Breast epithelium (tissue), 4 donors: ENCODE measurements at regions of chr12 and their contacts with region 1.

Region 1: DNA sequence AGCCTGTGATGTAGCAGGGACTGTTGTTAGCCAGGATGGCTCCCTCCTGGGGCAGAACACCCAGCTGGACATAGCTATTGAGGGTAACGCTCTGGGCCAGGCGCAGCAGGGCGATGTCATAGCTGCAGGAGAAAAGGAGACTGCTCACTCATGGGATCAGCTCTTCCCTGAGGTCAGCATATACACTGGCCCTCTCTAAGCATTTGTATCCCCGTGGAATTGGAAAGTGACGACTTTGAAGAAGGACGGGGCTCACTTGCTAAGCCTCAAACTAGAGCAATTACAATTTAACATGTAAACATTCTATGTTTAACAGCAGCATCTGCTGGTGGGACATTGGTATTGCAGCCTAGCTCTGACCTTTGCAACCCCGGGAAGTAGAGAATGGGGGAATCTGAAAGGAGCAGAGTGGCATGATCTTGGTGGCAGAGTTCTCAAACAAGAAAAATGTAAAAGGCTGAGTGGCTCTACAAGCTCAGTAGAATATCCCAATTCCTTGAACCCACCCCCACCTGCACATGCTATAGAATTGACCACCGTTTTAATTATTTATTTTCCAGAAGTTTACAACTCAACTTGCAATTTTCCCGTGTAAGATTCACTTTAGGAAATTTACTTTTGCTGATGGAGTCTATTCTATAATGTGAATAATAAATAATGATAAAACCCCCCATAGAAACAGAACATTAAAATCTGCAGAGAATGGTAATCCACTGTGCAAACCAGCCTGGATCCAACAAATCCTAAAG is 5.0 kb downstream of the CELA1 start:
- DNase-seq: peak; percentile 58 to 60
- H3K4me3 ChIP-seq: peak overlapping the region in 2 of 3 donors; percentile 16 to 53
- H3K27ac ChIP-seq: peak overlapping the region; percentile 16 to 40
- H3K4me1 ChIP-seq: no peaks in the 10 kb centered on the region
- H3K27me3 ChIP-seq: no peaks in the 10 kb centered on the region
- CTCF ChIP-seq: peak; percentile 98 to 99 (median 98)
- POLR2A ChIP-seq: no peak

Region 2: DNA sequence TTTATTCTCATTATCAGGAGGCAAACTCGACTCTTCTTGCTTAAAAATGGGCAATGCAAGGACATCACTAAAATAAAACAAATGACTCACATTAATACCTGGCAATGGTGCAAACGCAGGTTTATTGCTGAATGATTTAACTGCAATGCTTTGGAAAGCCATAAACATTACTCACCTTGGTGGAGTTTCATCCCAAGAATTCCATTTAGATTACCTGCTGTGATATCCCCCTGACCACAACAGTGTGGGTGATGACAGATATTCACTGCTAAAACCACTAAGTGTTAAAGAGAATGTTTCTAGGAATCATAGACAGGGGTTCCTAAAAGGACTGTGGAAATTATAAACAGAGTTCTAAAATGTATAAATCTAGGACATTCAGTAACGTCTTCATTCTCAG is 222.7 kb before region 1 on chr12:
- intact Hi-C with region 1: loop called (anchors 10 kb)
- DNase-seq: no peak
- H3K4me3 ChIP-seq: no peak overlapping the region
- H3K27ac ChIP-seq: no peak overlapping the region
- H3K4me1 ChIP-seq: no peaks in the 10 kb centered on the region
- H3K27me3 ChIP-seq: no peaks in the 10 kb centered on the region
- CTCF ChIP-seq: no peak
- POLR2A ChIP-seq: no peak

Region 3: GRCh38 chr12:51270067-51270970 is 71.1 kb before region 1 on chr12 and contains the start of gene SMAGP:
- intact Hi-C with region 1: loop called (anchors 5 kb)
- DNase-seq: peak; percentile 69 to 85
- H3K4me3 ChIP-seq: peak within 1 kb of the TSS; percentile 66 to 90 (median 79)
- H3K27ac ChIP-seq: peak within 1 kb of the TSS; percentile 87 to 89
- H3K4me1 ChIP-seq: no peaks in the 10 kb centered on the region
- H3K27me3 ChIP-seq: no peaks in the 10 kb centered on the region
- CTCF ChIP-seq: no peak
- POLR2A ChIP-seq: no peak
- total RNA-seq, gene SMAGP: 5.8 to 16.1 (median 15.5) TPM

Region 4: DNA sequence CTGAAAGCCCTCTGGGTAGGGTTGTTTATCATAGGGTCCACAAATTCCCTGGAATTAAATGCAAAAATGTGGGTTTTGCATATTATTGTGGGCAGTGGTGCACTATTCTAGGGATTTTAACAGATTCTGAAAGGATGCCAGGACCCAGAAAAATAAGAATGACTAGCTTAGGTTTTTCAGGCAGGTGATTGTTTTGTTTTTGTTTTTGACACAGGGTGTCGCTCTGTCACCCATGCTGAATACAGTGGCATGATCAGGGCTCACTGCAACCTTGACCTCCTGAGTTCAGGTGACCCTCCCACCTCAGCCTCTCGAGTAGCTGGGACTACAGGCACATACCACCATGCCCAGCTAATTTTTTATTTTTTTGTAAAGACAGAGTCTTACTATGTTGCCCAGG is 30.6 kb after region 1 on chr12:
- intact Hi-C with region 1: loop called (anchors 1 kb)
- DNase-seq: no peak
- H3K4me3 ChIP-seq: no peak overlapping the region
- H3K27ac ChIP-seq: peak overlapping the region; percentile 69 to 86
- H3K4me1 ChIP-seq: no peaks in the 10 kb centered on the region
- H3K27me3 ChIP-seq: no peaks in the 10 kb centered on the region
- CTCF ChIP-seq: no peak
- POLR2A ChIP-seq: no peak

Region 5: GRCh38 chr12:52258335-52258901 is 917.0 kb after region 1 on chr12:
- intact Hi-C with region 1: no loop called
- DNase-seq: peak in 1 of 2 donors; percentile 51
- H3K4me3 ChIP-seq: peak overlapping the region; percentile 4 to 54 (median 7)
- H3K27ac ChIP-seq: peak overlapping the region in 1 of 2 donors; percentile 75
- H3K4me1 ChIP-seq: peaks cover 0 to 5% of the 10 kb centered on the region in 2 donors
- H3K27me3 ChIP-seq: peaks cover 0 to 11% of the 10 kb centered on the region in 2 donors
- CTCF ChIP-seq: no peak
- POLR2A ChIP-seq: no peak

Region 6: DNA sequence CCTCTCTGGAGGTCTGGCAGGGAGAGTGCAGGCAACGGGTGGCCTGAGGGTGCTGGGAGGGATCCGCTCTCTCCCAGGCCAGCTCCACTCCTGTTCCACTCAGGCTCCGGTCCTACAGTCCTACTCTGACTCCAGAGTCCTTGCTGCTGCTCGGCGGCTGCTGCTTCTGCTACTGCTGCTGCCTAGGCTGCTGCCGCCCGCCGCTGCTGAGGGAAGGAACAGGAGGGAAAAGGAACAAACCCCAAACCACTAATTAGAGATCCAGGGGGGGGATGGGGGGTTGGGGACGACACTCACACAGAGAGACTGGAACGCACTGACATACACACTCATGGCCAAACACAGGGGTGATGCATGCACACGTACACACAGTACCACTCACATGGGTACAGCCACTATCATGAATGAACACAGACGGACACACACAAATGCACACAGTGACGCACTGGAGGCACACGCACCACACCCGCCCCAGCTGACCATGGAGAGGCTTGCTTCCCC is 1994.8 kb after region 1 on chr12 and contains the start of gene SP7:
- intact Hi-C with region 1: no loop called
- DNase-seq: no peak
- H3K4me3 ChIP-seq: no peak within 1 kb of the TSS
- H3K27ac ChIP-seq: no peak within 1 kb of the TSS
- H3K4me1 ChIP-seq: no peaks in the 10 kb centered on the region
- H3K27me3 ChIP-seq: peaks cover 0 to 23% of the 10 kb centered on the region in 2 donors
- CTCF ChIP-seq: no peak
- POLR2A ChIP-seq: no peak
- total RNA-seq, gene SP7: not detected